PC-9 (cell line): ENCODE measurements at regions of chr4 and their contacts with region 1.

Region 1: DNA sequence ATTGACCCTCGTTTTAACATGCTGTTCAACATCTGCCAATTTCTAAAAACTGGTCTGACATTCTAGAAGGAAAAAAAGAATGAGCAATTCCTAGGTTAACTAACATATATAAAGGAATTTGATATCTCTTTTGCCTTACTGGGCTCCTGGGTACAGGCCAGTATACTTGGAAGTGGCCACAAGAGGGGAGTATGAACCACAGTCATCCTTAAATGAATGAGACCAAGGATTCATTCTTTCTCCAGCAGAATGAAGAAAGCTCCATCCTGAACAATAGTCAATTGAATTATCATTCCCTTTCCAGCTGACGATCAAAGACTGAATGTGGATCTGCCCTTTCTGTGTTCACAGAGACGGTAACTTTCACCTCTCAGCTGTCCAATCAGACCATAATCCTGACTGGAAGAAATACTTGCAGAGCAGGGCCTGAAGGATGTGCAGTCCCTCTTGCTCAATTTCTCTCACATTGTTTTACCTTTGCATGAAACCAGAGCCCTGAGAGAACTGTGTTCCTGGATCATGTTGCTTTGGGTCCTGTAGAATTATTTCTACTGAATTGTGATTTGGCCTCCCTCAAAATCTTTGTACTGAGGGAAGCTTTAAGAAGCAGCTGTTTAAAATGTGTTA is 14.8 kb upstream of the SPARCL1 start:
- DNase-seq: no peak
- H3K4me3 ChIP-seq: no peak overlapping the region
- H3K27ac ChIP-seq: no peak overlapping the region
- H3K4me1 ChIP-seq: no peaks in the 10 kb centered on the region
- H3K27me3 ChIP-seq: no peaks in the 10 kb centered on the region
- CTCF ChIP-seq: peak; percentile 64

Region 2: GRCh38 chr4:87679449-87680169 is 135.7 kb after region 1 on chr4:
- CTCF ChIA-PET with region 1: interaction called, 3 read pairs
- POLR2A ChIA-PET with region 1: no interaction called
- intact Hi-C with region 1: loop called (anchors 10 kb)
- DNase-seq: no peak
- H3K4me3 ChIP-seq: no peak overlapping the region
- H3K27ac ChIP-seq: no peak overlapping the region
- H3K4me1 ChIP-seq: no peaks in the 10 kb centered on the region
- H3K27me3 ChIP-seq: no peaks in the 10 kb centered on the region
- CTCF ChIP-seq: peak; percentile 87

Region 3: GRCh38 chr4:87838890-87839591 is 295.1 kb after region 1 on chr4:
- CTCF ChIA-PET with region 1: interaction called, 4 read pairs
- POLR2A ChIA-PET with region 1: no interaction called
- intact Hi-C with region 1: loop called (anchors 2 kb)
- DNase-seq: no peak
- H3K4me3 ChIP-seq: no peak overlapping the region
- H3K27ac ChIP-seq: no peak overlapping the region
- H3K4me1 ChIP-seq: no peaks in the 10 kb centered on the region
- H3K27me3 ChIP-seq: no peaks in the 10 kb centered on the region
- CTCF ChIP-seq: peak; percentile 79

Region 4: DNA sequence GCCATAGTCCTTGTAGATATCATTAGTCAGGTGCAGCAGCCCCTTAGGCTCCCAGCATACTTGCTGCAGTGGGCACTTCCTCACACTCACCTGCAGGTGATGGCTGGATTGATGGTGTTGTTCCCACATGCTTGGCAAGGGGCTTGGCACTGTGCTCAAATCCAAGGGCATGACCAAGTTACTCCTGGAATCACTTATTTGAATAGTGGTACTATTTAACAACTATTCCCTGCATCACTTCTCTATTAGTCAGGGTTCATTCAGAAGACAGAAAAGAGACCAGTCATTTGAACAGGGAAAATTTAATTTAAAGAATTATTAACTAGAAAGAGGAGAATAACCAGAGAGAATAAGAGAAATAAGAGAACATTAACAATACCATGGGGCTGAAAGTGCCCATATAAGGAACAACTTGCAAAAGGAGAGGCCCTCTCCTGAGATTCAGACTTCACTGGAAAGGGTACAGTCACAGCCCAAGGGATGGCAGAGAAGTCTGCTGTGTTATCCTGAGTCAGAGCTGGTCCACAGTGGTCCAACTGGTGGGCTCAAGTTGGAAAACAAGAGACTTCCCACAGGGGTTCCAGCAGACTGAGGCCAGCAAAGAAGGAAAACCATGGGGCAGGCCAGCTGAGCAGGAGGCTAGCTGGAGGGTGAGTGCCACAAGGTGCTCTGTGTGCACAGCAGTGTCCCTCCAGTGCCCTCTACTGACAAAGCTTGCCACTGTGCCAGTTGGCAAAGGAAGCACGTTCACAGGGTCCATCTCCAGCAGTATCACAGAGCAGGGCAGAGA is 441.3 kb after region 1 on chr4:
- CTCF ChIA-PET with region 1: no interaction called
- POLR2A ChIA-PET with region 1: no interaction called
- intact Hi-C with region 1: loop called (anchors 10 kb)
- DNase-seq: peak; percentile 35 to 56
- H3K4me3 ChIP-seq: no peak overlapping the region
- H3K27ac ChIP-seq: no peak overlapping the region
- H3K4me1 ChIP-seq: no peaks in the 10 kb centered on the region
- H3K27me3 ChIP-seq: no peaks in the 10 kb centered on the region
- CTCF ChIP-seq: peak; percentile 69